Right lobe of liver (tissue), 6 donors: ENCODE measurements at regions of chr6 and their contacts with region 1.

Region 1: DNA sequence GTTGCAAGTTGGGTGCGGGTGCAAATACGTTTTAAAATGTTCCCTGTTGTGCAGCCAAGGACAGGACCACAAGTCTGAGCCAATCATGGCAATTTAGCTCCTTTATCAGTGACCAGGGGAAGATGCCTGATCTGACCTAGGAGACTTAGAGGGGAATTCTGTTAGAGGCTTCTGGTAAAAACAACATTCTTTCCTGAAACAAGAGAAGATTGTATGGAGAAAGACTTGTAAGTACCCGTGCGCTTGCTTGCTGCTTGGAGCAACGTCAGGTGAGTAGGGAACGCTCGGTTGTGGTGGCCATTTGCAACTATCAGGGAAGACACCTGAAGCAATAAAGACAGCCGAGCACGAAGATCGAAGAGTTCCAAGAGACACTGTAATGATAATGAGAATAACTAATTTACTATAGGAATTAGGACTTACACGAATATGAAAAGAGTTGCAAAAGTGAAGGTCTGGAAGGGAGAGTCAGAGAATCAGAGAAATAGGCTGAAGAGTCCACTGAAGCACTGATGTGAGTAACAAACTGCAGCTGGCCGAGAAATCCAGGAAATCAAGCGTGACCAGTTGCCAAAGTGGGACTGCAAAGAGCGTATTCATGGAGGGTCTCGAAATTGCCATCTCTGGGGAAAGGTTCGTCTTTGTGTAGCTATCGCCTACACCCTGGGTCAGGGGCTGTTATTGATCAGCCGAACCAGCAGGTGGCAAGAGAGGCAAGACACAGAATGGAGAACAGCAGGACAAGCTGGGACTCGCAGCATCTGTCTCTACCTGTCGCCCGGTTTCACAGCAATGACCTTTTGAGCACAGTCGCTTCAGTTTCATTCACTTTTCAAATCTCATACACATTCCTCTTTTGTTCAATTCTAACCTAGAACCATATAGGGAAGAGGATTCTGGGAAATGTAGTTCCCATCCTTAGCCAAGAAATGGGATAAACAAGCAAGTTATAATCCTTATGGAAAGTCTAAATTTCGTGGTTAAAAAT is 26.1 kb downstream of the LOC128125822 start:
- DNase-seq: peak; percentile 71 to 83 (median 79)
- ATAC-seq: peak; percentile 99 to 100 (median 99)
- H3K4me3 ChIP-seq: peak overlapping the region; percentile 41 to 52 (median 51)
- H3K27ac ChIP-seq: peak overlapping the region in 2 of 3 donors; percentile 20 to 26
- H3K4me1 ChIP-seq: no peaks in the 10 kb centered on the region
- H3K27me3 ChIP-seq: no peaks in the 10 kb centered on the region
- CTCF ChIP-seq: peak; percentile 85 to 89 (median 88)
- POLR2A ChIP-seq: no peak

Region 2: DNA sequence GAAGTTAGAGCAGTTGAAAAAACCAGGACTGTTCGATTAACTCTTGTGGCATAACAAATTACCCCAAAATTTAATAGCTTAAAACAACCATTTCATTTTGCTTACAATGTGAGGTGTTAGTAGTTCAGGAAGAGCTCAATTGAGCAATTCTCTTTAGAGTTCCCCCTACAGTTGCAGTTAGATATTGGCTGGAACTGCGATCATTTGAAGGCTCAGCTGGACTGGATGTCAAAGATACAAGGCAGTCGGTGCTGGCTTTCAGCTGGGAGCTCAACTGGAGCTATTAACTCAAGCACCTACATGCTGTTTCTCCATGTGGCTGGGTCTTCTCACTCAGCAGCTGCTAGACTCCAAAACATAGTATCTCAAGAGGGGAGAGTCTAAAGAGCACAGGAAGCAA is 122.0 kb before region 1 on chr6:
- intact Hi-C with region 1: no loop called
- DNase-seq: peak in 1 of 3 donors; percentile 60
- ATAC-seq: peak; percentile 78 to 84 (median 79)
- H3K4me3 ChIP-seq: no peak overlapping the region
- H3K27ac ChIP-seq: peak overlapping the region; percentile 58 to 71 (median 68)
- H3K4me1 ChIP-seq: peaks cover 0 to 29% (median 12%) of the 10 kb centered on the region in 4 donors
- H3K27me3 ChIP-seq: no peaks in the 10 kb centered on the region
- CTCF ChIP-seq: peak in 1 of 4 donors; percentile 18
- POLR2A ChIP-seq: peak; percentile 15

Region 3: GRCh38 chr6:63764318-63764916 is 166.1 kb after region 1 on chr6:
- intact Hi-C with region 1: loop called in 1 of 2 experiments (anchors 10 kb)
- DNase-seq: no peak
- ATAC-seq: peak in 3 of 4 donors; percentile 59 to 70 (median 65)
- H3K4me3 ChIP-seq: no peak overlapping the region
- H3K27ac ChIP-seq: no peak overlapping the region
- H3K4me1 ChIP-seq: no peaks in the 10 kb centered on the region
- H3K27me3 ChIP-seq: no peaks in the 10 kb centered on the region
- CTCF ChIP-seq: peak; percentile 60 to 72 (median 66)
- POLR2A ChIP-seq: no peak